HepG2 (cell line): ENCODE measurements at regions of chr7 and their contacts with region 1.

Region 1: GRCh38 chr7:2109936-2110585 is 122.7 kb downstream of the MAD1L1 start:
- DNase-seq: peak; percentile 70
- ATAC-seq: no peak
- H3K4me3 ChIP-seq: no peak overlapping the region
- H3K27ac ChIP-seq: peak overlapping the region; percentile 92
- H3K4me1 ChIP-seq: peaks cover 50% of the 10 kb centered on the region
- H3K27me3 ChIP-seq: no peaks in the 10 kb centered on the region
- CTCF ChIP-seq: no peak
- EP300 ChIP-seq: no peak
- POLR2A ChIP-seq: no peak
- RAD21 ChIP-seq: no peak

Region 2: DNA sequence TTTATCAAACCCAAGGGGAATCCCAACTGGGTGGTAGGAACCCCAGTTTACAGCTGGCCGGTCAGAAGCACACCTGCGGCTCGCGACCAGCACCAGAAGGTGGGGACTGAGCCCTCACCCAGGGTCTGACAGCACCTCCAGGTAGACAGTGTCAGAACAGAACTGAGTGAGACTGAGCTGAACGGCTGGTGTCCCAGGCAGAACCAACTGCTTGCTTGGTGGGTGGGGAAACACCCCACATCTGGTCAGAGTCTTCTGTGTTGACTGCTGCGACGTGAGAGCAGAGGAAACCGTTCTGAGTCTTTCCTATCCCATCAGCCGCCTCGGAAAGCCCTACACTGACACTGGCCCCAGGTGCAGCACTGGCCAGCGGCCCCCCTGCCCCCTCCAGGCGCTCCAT is 38.0 kb before region 1 on chr7:
- CTCF ChIA-PET with region 1: no interaction called
- POLR2A ChIA-PET with region 1: no interaction called
- in situ Hi-C with region 1: no loop called
- intact Hi-C with region 1: no loop called
- DNase-seq: no peak
- ATAC-seq: no peak
- H3K4me3 ChIP-seq: no peak overlapping the region
- H3K27ac ChIP-seq: no peak overlapping the region
- H3K4me1 ChIP-seq: no peaks in the 10 kb centered on the region
- H3K27me3 ChIP-seq: no peaks in the 10 kb centered on the region
- CTCF ChIP-seq: no peak
- EP300 ChIP-seq: no peak
- POLR2A ChIP-seq: no peak
- RAD21 ChIP-seq: no peak

Region 3: GRCh38 chr7:2195400-2196246 is 85.6 kb after region 1 on chr7:
- CTCF ChIA-PET with region 1: no interaction called
- POLR2A ChIA-PET with region 1: no interaction called
- in situ Hi-C with region 1: no loop called
- intact Hi-C with region 1: loop called (anchors 5 kb)
- DNase-seq: no peak
- ATAC-seq: no peak
- H3K4me3 ChIP-seq: no peak overlapping the region
- H3K27ac ChIP-seq: no peak overlapping the region
- H3K4me1 ChIP-seq: 0 out of 2 replicates have a peak, but pooled peaks cover 8% of the 10 kb centered on the region
- H3K27me3 ChIP-seq: no peaks in the 10 kb centered on the region
- CTCF ChIP-seq: no peak
- EP300 ChIP-seq: no peak
- POLR2A ChIP-seq: no peak
- RAD21 ChIP-seq: no peak

Region 4: DNA sequence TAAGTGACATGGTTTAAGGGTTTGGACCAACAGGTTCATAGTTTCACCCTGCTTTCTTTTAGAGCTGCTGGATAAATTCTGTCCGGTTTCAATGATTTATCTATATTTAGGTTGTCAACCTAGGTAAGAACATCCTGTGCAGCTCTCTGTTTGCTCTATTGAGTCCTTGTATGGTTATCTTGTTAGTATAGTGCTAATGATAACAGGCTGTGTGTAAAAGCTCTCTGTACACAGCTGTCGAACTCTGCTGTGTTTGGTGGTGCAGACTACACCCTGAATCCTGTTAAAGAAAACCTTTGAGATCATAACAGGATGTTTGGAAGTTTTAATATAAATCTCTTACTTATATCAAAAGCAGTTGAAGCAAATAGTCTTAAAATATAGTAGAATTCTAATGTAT is 1410.1 kb after region 1 on chr7:
- CTCF ChIA-PET with region 1: no interaction called
- POLR2A ChIA-PET with region 1: no interaction called
- in situ Hi-C with region 1: no loop called
- intact Hi-C with region 1: no loop called
- DNase-seq: peak; percentile 9
- ATAC-seq: peak; percentile 69
- H3K4me3 ChIP-seq: no peak overlapping the region
- H3K27ac ChIP-seq: no peak overlapping the region
- H3K4me1 ChIP-seq: peaks cover 10% of the 10 kb centered on the region
- H3K27me3 ChIP-seq: no peaks in the 10 kb centered on the region
- CTCF ChIP-seq: no peak
- EP300 ChIP-seq: no peak
- POLR2A ChIP-seq: no peak
- RAD21 ChIP-seq: no peak